GM10248 (cell line): ENCODE measurements at regions of chr7 and their contacts with region 1.

Region 1: GRCh38 chr7:17152721-17153120 is 145.7 kb upstream of the AHR start:
- DNase-seq: no peak
- CTCF ChIP-seq: no peak

Region 2: GRCh38 chr7:17130281-17131059 is 22.3 kb before region 1 on chr7:
- CTCF ChIA-PET with region 1: interaction called, 13 read pairs
- POLR2A ChIA-PET with region 1: interaction called, 5 read pairs
- DNase-seq: no peak
- CTCF ChIP-seq: no peak

Region 3: DNA sequence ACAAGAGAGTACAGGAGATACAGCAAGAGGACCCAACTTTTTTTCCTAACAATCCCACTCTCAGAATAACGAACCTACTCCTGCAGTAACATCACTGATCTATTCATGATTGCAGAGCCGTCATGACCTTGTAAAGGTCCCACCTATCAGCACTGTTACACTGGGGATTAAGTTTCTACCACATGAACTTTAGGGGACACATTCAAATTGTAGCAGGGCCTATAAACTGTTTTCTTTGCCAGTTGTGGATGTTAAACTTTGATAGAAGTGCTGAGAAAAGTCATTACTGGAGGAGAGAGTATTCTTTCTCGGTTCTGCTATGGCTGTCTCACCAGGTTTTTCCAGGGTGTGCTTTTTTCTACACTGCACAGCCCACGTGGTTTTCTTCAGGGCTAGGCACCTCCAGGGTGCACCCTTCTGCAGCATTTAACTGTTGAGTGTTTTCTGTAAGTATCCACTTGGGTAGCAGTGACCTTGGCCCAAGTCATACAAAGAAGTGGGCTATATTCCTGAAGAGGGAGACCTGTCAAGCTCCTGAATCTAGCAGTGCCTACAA is 14.2 kb after region 1 on chr7:
- CTCF ChIA-PET with region 1: no interaction called
- POLR2A ChIA-PET with region 1: no interaction called
- DNase-seq: peak; percentile 13
- CTCF ChIP-seq: no peak

Region 4: GRCh38 chr7:17599733-17600685 is 447.3 kb after region 1 on chr7:
- CTCF ChIA-PET with region 1: no interaction called
- POLR2A ChIA-PET with region 1: no interaction called
- DNase-seq: no peak
- CTCF ChIP-seq: no peak